K562 (cell line): ENCODE measurements at regions of chr10 and their contacts with region 1.

Region 1: GRCh38 chr10:21495752-21496342 is 29.6 kb downstream of the SKIDA1 start:
- DNase-seq: peak; percentile 90 to 96 (median 96)
- ATAC-seq: peak; percentile 86
- H3K4me3 ChIP-seq: peak overlapping the region; percentile 71
- H3K27ac ChIP-seq: peak overlapping the region; percentile 85
- H3K4me1 ChIP-seq: peaks cover 0 to 42% of the 10 kb centered on the region in 2 experiments; a peak in 2 of 5 replicates
- H3K27me3 ChIP-seq: no peaks in the 10 kb centered on the region
- CTCF ChIP-seq: peak; percentile 92 to 94 (median 92)
- EP300 ChIP-seq: peak; percentile 67; the same call in 1 of the 2 replicates
- POLR2A ChIP-seq: peak; percentile 63; the same call in 1 of the 2 replicates
- RAD21 ChIP-seq: peak; percentile 96 to 98

Region 2: DNA sequence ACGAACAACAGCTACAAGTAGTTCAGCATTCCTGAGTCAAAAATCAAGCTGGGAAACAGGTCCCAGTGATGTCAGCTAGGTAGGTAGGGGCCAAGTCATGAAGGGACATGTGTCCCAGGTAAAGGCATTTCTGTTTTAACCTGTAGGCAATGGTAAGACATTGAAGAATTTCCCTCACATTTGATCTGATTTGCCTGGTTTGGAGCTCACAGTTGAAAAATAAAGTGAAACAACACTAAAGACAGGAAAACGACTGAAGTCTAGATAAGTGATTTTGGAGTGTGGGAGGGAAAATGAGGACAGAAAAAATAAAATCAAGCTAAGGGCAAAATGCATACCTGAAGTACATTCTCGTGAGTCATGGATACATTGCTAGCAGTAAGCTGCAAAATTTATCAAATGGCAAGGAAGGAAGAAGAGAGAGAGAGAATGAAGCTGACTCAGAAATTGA is 140.3 kb before region 1 on chr10:
- CTCF ChIA-PET with region 1: no interaction called
- POLR2A ChIA-PET with region 1: no interaction called
- in situ Hi-C with region 1: no loop called
- intact Hi-C with region 1: no loop called
- DNase-seq: no peak
- ATAC-seq: no peak
- H3K4me3 ChIP-seq: no peak overlapping the region
- H3K27ac ChIP-seq: no peak overlapping the region
- H3K4me1 ChIP-seq: no peaks in the 10 kb centered on the region
- H3K27me3 ChIP-seq: peaks cover 10 to 11% of the 10 kb centered on the region in 2 experiments; a peak in 2 of 5 replicates
- CTCF ChIP-seq: no peak
- EP300 ChIP-seq: no peak
- POLR2A ChIP-seq: no peak
- RAD21 ChIP-seq: no peak

Region 3: GRCh38 chr10:21516242-21517131 is 20.6 kb after region 1 on chr10:
- CTCF ChIA-PET with region 1: no interaction called
- POLR2A ChIA-PET with region 1: interaction called, 5 read pairs
- in situ Hi-C with region 1: no loop called
- intact Hi-C with region 1: loop called (anchors 2 kb)
- DNase-seq: peak; percentile 49 to 73 (median 52)
- ATAC-seq: peak; percentile 68
- H3K4me3 ChIP-seq: peak overlapping the region; percentile 54
- H3K27ac ChIP-seq: no peak overlapping the region
- H3K4me1 ChIP-seq: peaks cover 14 to 19% of the 10 kb centered on the region in 2 experiments; a peak in 4 of 5 replicates
- H3K27me3 ChIP-seq: no peaks in the 10 kb centered on the region
- CTCF ChIP-seq: no peak
- EP300 ChIP-seq: no peak
- POLR2A ChIP-seq: no peak
- RAD21 ChIP-seq: no peak

Region 4: GRCh38 chr10:21533467-21534279 is 37.8 kb after region 1 on chr10 and contains the start of gene MLLT10:
- CTCF ChIA-PET with region 1: no interaction called
- POLR2A ChIA-PET with region 1: interaction called, 4 read pairs
- in situ Hi-C with region 1: no loop called
- intact Hi-C with region 1: loop called (anchors 5 kb)
- DNase-seq: peak; percentile 88 to 97 (median 90)
- ATAC-seq: peak; percentile 74
- H3K4me3 ChIP-seq: peak within 1 kb of the TSS; percentile 60
- H3K27ac ChIP-seq: peak within 1 kb of the TSS; percentile 96
- H3K4me1 ChIP-seq: peaks cover 8 to 11% of the 10 kb centered on the region in 2 experiments; a peak in 4 of 5 replicates
- H3K27me3 ChIP-seq: no peaks in the 10 kb centered on the region
- CTCF ChIP-seq: 0 out of 6 replicates have a peak, but pooled peaks of 2 of the 3 experiments have one; percentile 7 to 19
- EP300 ChIP-seq: no peak
- POLR2A ChIP-seq: peak; percentile 89
- RAD21 ChIP-seq: no peak
- polyA plus RNA-seq, gene MLLT10: 18.8 to 25.8 TPM

Region 5: DNA sequence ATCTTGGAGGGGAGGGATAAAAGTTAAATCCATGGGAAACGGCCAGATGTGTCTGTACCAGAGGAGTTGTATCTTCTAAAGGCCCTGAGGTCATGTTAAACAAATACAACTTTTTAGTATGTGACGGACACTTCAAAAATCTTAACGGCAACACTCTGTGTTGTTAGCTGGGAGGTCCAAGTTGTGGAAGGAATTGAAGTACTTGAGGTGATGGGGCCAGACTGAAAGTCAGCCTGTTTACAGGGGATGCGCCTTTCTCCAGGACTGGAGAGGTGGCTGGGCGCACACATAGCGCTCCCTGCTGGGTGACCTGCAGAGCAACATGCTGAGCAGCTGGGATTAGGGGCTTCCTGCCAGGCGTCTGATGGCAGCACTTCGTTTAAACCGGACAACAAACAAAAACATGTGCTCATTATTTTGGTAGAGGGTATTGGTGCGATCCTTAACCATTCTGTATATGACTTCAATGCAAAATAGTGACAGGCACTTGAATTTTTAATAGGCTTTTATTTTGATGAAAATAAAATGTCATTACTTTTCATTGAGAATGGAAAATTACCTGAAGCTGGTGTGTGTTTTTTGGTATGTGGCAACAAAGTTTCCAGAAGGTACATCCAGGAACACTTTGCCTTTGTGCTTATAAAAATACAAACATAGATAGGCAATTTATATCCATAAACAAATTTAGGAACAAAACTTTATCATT is 236.4 kb after region 1 on chr10:
- CTCF ChIA-PET with region 1: interaction called, 15 read pairs
- POLR2A ChIA-PET with region 1: interaction called, 3 read pairs
- in situ Hi-C with region 1: no loop called
- intact Hi-C with region 1: loop called (anchors 1 kb)
- DNase-seq: peak; percentile 56 to 74 (median 68)
- ATAC-seq: peak; percentile 99
- H3K4me3 ChIP-seq: no peak overlapping the region
- H3K27ac ChIP-seq: no peak overlapping the region
- H3K4me1 ChIP-seq: no peaks in the 10 kb centered on the region; a peak in 1 of 5 replicates
- H3K27me3 ChIP-seq: no peaks in the 10 kb centered on the region
- CTCF ChIP-seq: peak; percentile 80 to 92 (median 83)
- EP300 ChIP-seq: no peak
- POLR2A ChIP-seq: no peak
- RAD21 ChIP-seq: peak; percentile 73 to 92

Region 6: GRCh38 chr10:21953585-21954057 is 457.8 kb after region 1 on chr10:
- CTCF ChIA-PET with region 1: no interaction called
- POLR2A ChIA-PET with region 1: no interaction called
- in situ Hi-C with region 1: loop called (anchors 25 kb)
- intact Hi-C with region 1: loop called (anchors 5 kb)
- DNase-seq: peak; percentile 45 to 55 (median 50)
- ATAC-seq: peak; percentile 75
- H3K4me3 ChIP-seq: no peak overlapping the region
- H3K27ac ChIP-seq: no peak overlapping the region
- H3K4me1 ChIP-seq: peaks cover 4 to 7% of the 10 kb centered on the region in 2 experiments; a peak in 3 of 5 replicates
- H3K27me3 ChIP-seq: no peaks in the 10 kb centered on the region
- CTCF ChIP-seq: peak in 2 of 3 experiments; percentile 23 to 66; a peak in 2 of 6 replicates
- EP300 ChIP-seq: no peak
- POLR2A ChIP-seq: no peak
- RAD21 ChIP-seq: peak; percentile 36 to 57; a peak in 3 of 4 replicates